Psoas muscle (tissue), 8 donors: ENCODE measurements at regions of chr11 and their contacts with region 1.

Region 1: GRCh38 chr11:122439911-122440810 is 215.4 kb upstream of the UBASH3B start:
- DNase-seq: peak; percentile 27 to 67
- ATAC-seq: peak; percentile 68 to 85 (median 76)
- H3K4me3 ChIP-seq: peak overlapping the region; percentile 70
- H3K27ac ChIP-seq: peak overlapping the region; percentile 4
- H3K4me1 ChIP-seq: peaks cover 12% of the 10 kb centered on the region
- H3K27me3 ChIP-seq: no peaks in the 10 kb centered on the region
- CTCF ChIP-seq: no peak

Region 2: DNA sequence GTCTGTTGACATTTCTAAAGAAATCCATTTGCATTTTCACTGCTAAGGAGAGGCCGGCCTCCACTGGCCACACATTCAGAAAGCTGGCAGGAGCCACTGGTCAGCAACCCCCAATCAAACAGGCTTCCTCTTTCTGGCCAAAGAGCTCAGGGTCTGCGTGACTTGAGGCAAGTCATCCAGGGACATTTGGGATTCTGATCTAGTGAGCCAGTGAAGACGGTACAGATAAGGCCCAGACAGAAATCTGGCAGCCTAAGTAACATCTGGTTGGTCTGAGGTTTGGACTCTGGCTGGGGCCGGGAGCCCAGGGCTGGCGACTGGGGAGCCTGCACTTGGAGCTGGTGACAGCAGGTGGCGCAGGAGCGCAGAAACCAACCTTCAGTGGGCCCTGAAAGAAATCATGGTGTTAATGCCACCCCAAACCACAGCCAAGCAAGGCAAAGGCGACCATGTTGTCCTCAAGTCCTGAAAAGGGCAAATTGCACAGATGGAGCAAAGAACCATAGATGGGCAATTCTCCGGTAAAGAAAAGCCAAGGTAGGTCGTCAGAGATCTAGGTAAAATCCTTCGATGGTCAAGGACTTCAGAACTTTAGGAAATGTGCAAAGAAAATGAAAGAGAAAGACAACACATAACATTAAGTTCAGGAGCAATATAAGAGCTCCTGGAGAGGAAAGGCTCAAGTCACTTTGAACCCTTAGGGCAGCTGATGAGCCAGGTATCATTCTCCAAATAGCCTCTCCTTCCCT is 224.7 kb before region 1 on chr11:
- intact Hi-C with region 1: loop called (anchors 5 to 10 kb)
- DNase-seq: peak; percentile 78 to 89
- ATAC-seq: peak; percentile 94 to 98 (median 98)
- H3K4me3 ChIP-seq: no peak overlapping the region
- H3K27ac ChIP-seq: peak overlapping the region; percentile 64
- H3K4me1 ChIP-seq: peaks cover 12% of the 10 kb centered on the region
- H3K27me3 ChIP-seq: no peaks in the 10 kb centered on the region
- CTCF ChIP-seq: peak; percentile 92

Region 3: DNA sequence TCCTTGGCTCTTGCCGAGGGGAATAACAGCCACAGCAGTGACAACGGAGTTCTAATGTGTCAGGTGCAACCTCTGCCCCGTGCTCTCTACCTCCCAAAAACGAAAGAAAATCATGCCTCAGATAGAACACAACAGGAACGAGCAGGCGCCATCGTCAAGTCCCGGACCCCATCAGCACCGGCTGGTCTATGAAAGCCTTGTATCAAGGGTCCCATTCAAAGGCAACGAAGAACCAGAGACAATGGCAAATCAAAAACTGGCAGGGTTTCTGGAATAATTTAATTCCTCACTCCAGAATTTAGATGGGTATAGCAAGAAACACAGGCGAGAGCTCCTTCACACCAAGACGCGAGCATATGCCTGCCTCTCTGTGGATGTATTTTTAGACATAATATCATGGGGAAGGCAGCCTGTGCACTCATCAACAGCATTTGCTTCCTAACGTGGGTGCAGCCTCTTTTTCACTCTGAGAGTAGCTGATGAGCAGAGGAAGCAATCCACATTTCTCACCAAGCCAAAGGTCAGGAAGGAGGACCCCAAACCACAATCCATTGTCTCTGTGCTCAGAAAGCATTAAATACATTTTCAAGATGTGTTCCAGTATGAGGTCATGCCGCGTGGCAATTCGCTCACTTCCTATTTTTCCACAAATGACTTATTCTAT is 130.8 kb before region 1 on chr11:
- intact Hi-C with region 1: loop called in 1 of 2 experiments (anchors 5 kb)
- DNase-seq: no peak
- ATAC-seq: peak; percentile 83 to 97 (median 95)
- H3K4me3 ChIP-seq: peak overlapping the region; percentile 54
- H3K27ac ChIP-seq: peak overlapping the region; percentile 77
- H3K4me1 ChIP-seq: peaks cover 12% of the 10 kb centered on the region
- H3K27me3 ChIP-seq: no peaks in the 10 kb centered on the region
- CTCF ChIP-seq: no peak

Region 4: GRCh38 chr11:122486793-122487495 is 46.8 kb after region 1 on chr11:
- intact Hi-C with region 1: loop called in 1 of 2 experiments (anchors 5 kb)
- DNase-seq: no peak
- ATAC-seq: no peak
- H3K4me3 ChIP-seq: no peak overlapping the region
- H3K27ac ChIP-seq: no peak overlapping the region
- H3K4me1 ChIP-seq: peaks cover 15% of the 10 kb centered on the region
- H3K27me3 ChIP-seq: no peaks in the 10 kb centered on the region
- CTCF ChIP-seq: no peak